ENCODE measurements at regions of chr11 and their contacts with region 1.

Region 1: GRCh38 chr11:128948589-128948988 is 5.9 kb upstream of the TP53AIP1 start:
- DNase-seq: no peak
- ATAC-seq: peak; percentile 48; the same call in 1 of the 2 replicates
- H3K4me3 ChIP-seq: no peak overlapping the region
- H3K27ac ChIP-seq: no peak overlapping the region
- H3K4me1 ChIP-seq: no peaks in the 10 kb centered on the region
- H3K27me3 ChIP-seq: no peaks in the 10 kb centered on the region
- CTCF ChIP-seq: no peak; the same call in 1 of the 2 replicates

Region 2: GRCh38 chr11:128928400-128928799 is 20.2 kb before region 1 on chr11:
- CTCF ChIA-PET with region 1: no interaction called
- POLR2A ChIA-PET with region 1: interaction called, 16 read pairs
- in situ Hi-C with region 1: no loop called
- intact Hi-C with region 1: no loop called
- DNase-seq: no peak
- ATAC-seq: no peak
- H3K4me3 ChIP-seq: no peak overlapping the region; a peak in 1 of 4 replicates
- H3K27ac ChIP-seq: no peak overlapping the region
- H3K4me1 ChIP-seq: no peaks in the 10 kb centered on the region
- H3K27me3 ChIP-seq: 0 out of 2 replicates have a peak, but pooled peaks cover 6% of the 10 kb centered on the region
- CTCF ChIP-seq: no peak